ENCODE measurements at regions of chr4 and their contacts with region 1.

Region 1: DNA sequence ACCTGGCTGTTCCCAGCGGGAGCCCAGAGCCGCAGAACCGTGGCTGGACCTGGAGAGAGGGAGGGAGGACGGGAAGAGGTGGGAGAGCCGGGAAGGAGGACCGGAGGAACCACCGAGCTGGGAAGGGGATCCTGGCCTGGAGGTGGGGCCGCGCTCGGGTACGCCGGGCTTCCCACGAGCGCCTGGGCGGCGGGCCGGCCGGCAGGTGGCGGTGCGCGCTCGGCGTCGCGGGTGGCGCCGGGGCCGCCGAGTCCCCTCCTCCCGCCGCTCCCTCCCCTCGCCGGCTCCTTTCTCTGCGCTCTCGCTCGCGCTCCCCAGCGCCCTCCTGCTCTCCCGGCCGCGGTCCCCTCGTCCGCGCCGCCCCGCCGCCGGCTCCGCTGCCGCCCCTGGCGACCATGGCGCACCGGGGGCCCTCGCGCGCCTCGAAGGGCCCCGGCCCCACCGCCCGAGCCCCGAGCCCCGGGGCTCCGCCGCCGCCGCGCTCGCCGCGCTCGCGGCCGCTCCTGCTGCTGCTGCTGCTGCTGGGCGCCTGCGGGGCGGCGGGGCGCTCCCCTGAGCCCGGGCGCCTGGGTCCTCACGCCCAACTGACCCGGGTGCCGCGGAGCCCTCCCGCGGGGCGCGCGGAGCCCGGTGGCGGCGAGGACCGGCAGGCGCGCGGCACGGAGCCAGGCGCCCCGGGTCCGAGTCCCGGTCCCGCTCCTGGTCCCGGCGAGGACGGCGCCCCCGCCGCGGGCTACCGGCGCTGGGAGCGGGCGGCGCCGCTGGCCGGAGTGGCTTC is at the start of gene SORCS2:
- DNase-seq: peak; percentile 60
- H3K4me3 Mint-ChIP-seq: no peak within 1 kb of the TSS
- H3K27ac Mint-ChIP-seq: no peak within 1 kb of the TSS
- H3K4me1 Mint-ChIP-seq: peaks cover 2% of the 10 kb centered on the region
- H3K27me3 Mint-ChIP-seq: peaks cover 55% of the 10 kb centered on the region
- total RNA-seq, gene SORCS2: 0.07 TPM

Region 2: GRCh38 chr4:6885951-6886557 is 306.4 kb before region 1 on chr4:
- CTCF ChIA-PET with region 1: no interaction called
- POLR2A ChIA-PET with region 1: no interaction called
- intact Hi-C with region 1: no loop called
- DNase-seq: peak; percentile 33
- H3K4me3 Mint-ChIP-seq: no peak overlapping the region
- H3K27ac Mint-ChIP-seq: no peak overlapping the region
- H3K4me1 Mint-ChIP-seq: peaks cover 2% of the 10 kb centered on the region
- H3K27me3 Mint-ChIP-seq: no peaks in the 10 kb centered on the region

Region 3: GRCh38 chr4:7335344-7336069 is 143.1 kb after region 1 on chr4:
- CTCF ChIA-PET with region 1: interaction called, 10 read pairs
- POLR2A ChIA-PET with region 1: no interaction called
- intact Hi-C with region 1: loop called (anchors 2 kb)
- DNase-seq: peak; percentile 78
- H3K4me3 Mint-ChIP-seq: no peak overlapping the region
- H3K27ac Mint-ChIP-seq: no peak overlapping the region
- H3K4me1 Mint-ChIP-seq: no peaks in the 10 kb centered on the region
- H3K27me3 Mint-ChIP-seq: peaks cover 3% of the 10 kb centered on the region

Region 4: GRCh38 chr4:7719354-7720174 is 527.1 kb after region 1 on chr4:
- CTCF ChIA-PET with region 1: interaction called, 10 read pairs
- POLR2A ChIA-PET with region 1: no interaction called
- intact Hi-C with region 1: loop called (anchors 5 kb)
- DNase-seq: peak; percentile 70
- H3K4me3 Mint-ChIP-seq: no peak overlapping the region
- H3K27ac Mint-ChIP-seq: no peak overlapping the region
- H3K4me1 Mint-ChIP-seq: peaks cover 2% of the 10 kb centered on the region
- H3K27me3 Mint-ChIP-seq: peaks cover 3% of the 10 kb centered on the region